Activated CD8-positive, alpha-beta T cell treated with anti-CD3 and anti-CD28 coated beads for 36 hours (primary cell): ENCODE measurements at regions of chr10 and their contacts with region 1.

Region 1: GRCh38 chr10:102596506-102596971 is 47.7 kb upstream of the TRIM8 start:
- DNase-seq: peak; percentile 53
- ATAC-seq: peak; percentile 84
- H3K4me3 Mint-ChIP-seq: no peak overlapping the region
- H3K27ac Mint-ChIP-seq: no peak overlapping the region
- H3K4me1 Mint-ChIP-seq: no peaks in the 10 kb centered on the region
- H3K27me3 Mint-ChIP-seq: no peaks in the 10 kb centered on the region
- CTCF ChIP-seq: peak; percentile 77

Region 2: GRCh38 chr10:102420810-102421644 is 175.5 kb before region 1 on chr10 and contains the start of gene FBXL15:
- CTCF ChIA-PET with region 1: no interaction called
- POLR2A ChIA-PET with region 1: no interaction called
- intact Hi-C with region 1: no loop called
- DNase-seq: peak; percentile 98
- ATAC-seq: peak; percentile 85
- H3K4me3 Mint-ChIP-seq: peak within 1 kb of the TSS; percentile 87
- H3K27ac Mint-ChIP-seq: peak within 1 kb of the TSS; percentile 91
- H3K4me1 Mint-ChIP-seq: peaks cover 27% of the 10 kb centered on the region
- H3K27me3 Mint-ChIP-seq: peaks cover 14% of the 10 kb centered on the region
- CTCF ChIP-seq: no peak
- total RNA-seq, gene FBXL15: 14.1 to 15.7 TPM

Region 3: GRCh38 chr10:102503281-102504220 is 93.0 kb before region 1 on chr10 and contains the start of gene SUFU:
- CTCF ChIA-PET with region 1: interaction called, 5 read pairs
- POLR2A ChIA-PET with region 1: no interaction called
- intact Hi-C with region 1: loop called (anchors 5 kb)
- DNase-seq: peak; percentile 99
- ATAC-seq: peak; percentile 78
- H3K4me3 Mint-ChIP-seq: no peak within 1 kb of the TSS
- H3K27ac Mint-ChIP-seq: peak within 1 kb of the TSS; percentile 84
- H3K4me1 Mint-ChIP-seq: peaks cover 26% of the 10 kb centered on the region
- H3K27me3 Mint-ChIP-seq: no peaks in the 10 kb centered on the region
- CTCF ChIP-seq: peak; percentile 82
- total RNA-seq, gene SUFU: 8.5 to 8.8 TPM